GM23248 (cell line): ENCODE measurements at regions of chr18 and their contacts with region 1.

Region 1: DNA sequence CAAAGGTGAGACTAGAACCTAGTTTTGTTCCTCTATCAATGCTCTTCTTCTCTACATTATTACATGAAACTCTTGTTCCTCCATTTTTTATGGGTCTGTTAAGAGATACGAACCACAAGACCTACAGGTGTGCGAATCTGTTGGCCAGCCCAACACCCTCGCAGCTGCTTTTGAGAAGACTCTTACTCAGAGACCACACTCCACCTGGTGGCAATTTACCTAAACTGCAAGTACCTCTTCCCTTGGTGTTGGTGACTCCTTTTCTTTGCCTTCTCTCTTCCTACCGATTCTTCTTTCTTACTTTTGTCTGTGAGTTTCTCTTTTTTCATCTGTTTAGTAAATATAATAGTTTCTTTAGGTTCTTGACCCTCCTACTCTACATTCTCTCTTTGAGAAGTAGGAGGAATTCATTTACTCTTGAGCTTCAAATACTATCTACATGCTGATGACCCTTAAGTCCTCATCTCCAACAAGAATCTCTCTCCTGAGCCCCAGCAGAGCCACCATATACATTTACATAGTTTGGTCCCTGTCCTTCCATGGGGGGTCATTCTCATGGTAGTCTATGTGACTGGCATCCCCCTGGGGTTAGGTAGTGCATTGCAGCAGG is 81.8 kb upstream of the GAREM1 start:
- DNase-seq: peak; percentile 72
- H3K4me3 ChIP-seq: no peak overlapping the region
- H3K27ac ChIP-seq: no peak overlapping the region
- H3K4me1 ChIP-seq: no peaks in the 10 kb centered on the region
- H3K27me3 ChIP-seq: no peaks in the 10 kb centered on the region

Region 2: GRCh38 chr18:32167975-32168730 is 384.4 kb before region 1 on chr18:
- in situ Hi-C with region 1: loop called (anchors 10 kb)
- DNase-seq: peak; percentile 13
- H3K4me3 ChIP-seq: no peak overlapping the region
- H3K27ac ChIP-seq: no peak overlapping the region
- H3K4me1 ChIP-seq: no peaks in the 10 kb centered on the region
- H3K27me3 ChIP-seq: no peaks in the 10 kb centered on the region

Region 3: DNA sequence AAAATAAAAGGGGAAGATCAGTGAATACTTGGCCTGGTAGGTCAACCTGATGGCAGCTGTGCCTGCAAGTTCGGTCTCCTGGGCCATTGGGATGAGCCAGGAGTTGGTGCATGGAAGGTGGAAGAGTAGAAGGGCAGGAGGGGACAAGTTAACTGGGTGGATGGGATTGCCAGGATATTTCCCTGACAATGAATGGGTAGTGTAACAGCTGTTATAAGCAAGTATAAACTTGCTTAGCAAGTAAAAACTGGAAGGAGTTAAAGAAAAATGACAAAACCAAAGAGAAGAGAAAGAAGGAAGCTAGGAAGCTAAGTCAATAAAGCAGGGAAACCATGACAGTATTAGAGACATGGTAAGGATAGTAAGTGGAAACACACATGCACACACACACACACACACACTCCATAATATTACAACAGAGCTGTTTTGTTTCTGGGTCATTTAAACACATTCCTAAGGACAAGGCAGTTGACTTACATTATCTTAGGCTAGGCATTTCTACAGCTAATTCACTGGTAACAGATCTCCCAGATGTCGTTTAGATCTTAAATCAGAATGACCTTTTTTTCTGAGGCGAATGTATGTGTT is 333.0 kb before region 1 on chr18:
- in situ Hi-C with region 1: no loop called
- DNase-seq: no peak
- H3K4me3 ChIP-seq: no peak overlapping the region
- H3K27ac ChIP-seq: no peak overlapping the region
- H3K4me1 ChIP-seq: no peaks in the 10 kb centered on the region
- H3K27me3 ChIP-seq: no peaks in the 10 kb centered on the region

Region 4: GRCh38 chr18:32494111-32494510 is 58.4 kb before region 1 on chr18:
- in situ Hi-C with region 1: no loop called
- DNase-seq: no peak
- H3K4me3 ChIP-seq: no peak overlapping the region
- H3K27ac ChIP-seq: no peak overlapping the region
- H3K4me1 ChIP-seq: no peaks in the 10 kb centered on the region
- H3K27me3 ChIP-seq: no peaks in the 10 kb centered on the region; the same call in none of the 2 replicates

Region 5: GRCh38 chr18:32822197-32822596 is 269.7 kb after region 1 on chr18:
- in situ Hi-C with region 1: no loop called
- DNase-seq: no peak
- H3K4me3 ChIP-seq: no peak overlapping the region
- H3K27ac ChIP-seq: no peak overlapping the region
- H3K4me1 ChIP-seq: no peaks in the 10 kb centered on the region
- H3K27me3 ChIP-seq: no peaks in the 10 kb centered on the region